ENCODE measurements at regions of chr5 and their contacts with region 1.

Region 1: DNA sequence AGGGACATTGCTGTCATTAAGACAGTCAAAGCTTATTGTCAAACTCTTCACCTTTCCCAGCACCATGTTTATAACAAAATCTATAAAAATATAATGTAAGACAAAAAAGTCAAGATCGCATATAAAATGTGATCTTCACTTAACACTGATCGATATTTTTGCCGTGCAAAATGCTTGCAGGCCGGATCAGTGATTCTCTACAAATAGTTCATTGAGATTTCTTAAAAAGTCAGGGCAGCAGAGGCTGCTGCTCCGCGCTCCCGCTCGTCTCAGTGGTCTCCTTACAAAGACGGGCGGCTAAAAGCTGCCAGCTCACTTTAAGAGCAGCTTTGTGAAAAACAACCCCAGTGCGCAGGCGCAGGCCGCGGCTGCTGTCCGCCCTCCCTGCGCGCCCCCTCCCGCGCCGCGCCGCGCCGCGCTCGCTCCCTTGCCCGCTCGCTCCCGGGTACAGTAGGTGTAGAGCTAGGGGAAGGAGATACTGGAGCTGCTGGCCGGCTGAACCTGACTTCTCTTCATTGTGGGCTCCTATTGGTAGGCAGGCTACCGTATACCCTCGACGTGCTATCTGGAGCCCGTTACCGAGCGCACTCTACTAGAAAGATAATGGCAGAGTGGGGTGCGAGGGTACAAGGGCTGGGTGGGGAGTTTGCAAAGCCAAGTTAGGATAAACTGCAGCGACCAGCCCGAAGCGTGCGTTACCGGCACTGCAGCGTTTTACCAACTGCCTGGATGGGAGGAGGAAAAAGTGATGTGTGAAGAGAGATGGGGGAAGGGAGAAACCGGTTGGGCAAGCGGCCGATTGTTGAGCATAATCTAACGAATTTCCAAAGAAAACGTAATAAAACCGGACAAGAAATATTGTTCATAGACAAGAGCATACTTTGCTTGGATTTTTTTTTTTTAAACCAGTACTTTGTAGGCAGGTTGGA is at the start of gene ARRDC3:
- DNase-seq: peak; percentile 84
- CTCF ChIP-seq: no peak

Region 2: DNA sequence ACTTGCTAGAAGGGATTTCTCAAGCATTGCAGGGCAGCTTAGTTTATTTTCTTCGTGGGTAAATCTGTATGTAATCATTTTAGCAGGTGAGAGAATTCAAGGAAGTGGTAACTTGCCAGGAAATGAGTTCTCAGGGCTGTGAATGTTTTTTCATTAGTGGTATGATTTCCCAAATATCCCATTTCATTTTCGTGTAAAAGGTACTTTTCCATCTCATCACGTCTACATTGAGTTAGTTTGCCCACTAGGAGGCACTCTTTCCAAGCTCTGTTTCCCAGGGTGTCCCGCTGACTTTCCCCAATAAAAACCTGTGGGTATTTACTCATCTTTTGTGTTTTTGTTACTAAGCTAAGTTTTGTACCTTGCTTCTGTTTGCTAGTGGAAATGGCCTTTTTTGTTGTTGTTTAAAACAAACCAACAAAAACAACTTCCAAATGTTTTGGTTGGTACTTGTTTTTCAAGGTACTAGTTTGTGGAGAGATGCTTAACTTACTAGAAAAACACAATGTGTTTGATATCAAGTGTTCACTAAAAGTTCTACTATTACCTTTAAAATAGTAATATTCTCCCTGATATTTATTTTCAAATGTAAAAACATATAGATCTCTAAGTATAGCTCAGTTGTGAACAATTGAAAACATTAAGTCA is 451.1 kb before region 1 on chr5:
- CTCF ChIA-PET with region 1: interaction called, 30 read pairs
- POLR2A ChIA-PET with region 1: no interaction called
- DNase-seq: peak; percentile 56
- CTCF ChIP-seq: peak; percentile 76

Region 3: DNA sequence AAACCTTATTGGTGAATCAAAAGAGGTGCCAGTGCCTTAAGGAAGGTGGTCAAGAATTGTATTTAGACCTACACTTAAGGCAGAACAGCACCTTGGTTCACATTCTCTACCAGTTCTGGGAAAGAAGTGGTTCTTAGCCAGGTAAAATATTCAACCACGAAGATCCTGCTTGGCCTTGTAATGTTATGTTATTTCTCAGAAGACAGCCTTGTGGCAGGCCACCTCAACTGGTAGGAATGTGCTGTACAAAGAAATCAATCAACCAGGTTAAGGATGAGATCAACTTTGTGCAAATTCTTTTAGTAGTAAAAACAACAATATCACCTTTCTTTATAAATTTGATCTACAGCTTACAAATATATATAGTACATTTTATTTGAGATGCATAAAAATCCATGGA is 247.0 kb before region 1 on chr5:
- CTCF ChIA-PET with region 1: no interaction called
- POLR2A ChIA-PET with region 1: no interaction called
- DNase-seq: no peak
- CTCF ChIP-seq: no peak

Region 4: GRCh38 chr5:91183737-91184136 is 199.6 kb before region 1 on chr5:
- CTCF ChIA-PET with region 1: interaction called, 23 read pairs
- POLR2A ChIA-PET with region 1: no interaction called
- DNase-seq: no peak
- CTCF ChIP-seq: no peak

Region 5: GRCh38 chr5:91225848-91226686 is 157.2 kb before region 1 on chr5:
- CTCF ChIA-PET with region 1: interaction called, 92 read pairs
- POLR2A ChIA-PET with region 1: interaction called, 6 read pairs
- DNase-seq: peak; percentile 37
- CTCF ChIP-seq: peak; percentile 61

Region 6: GRCh38 chr5:91280362-91281269 is 102.7 kb before region 1 on chr5:
- CTCF ChIA-PET with region 1: interaction called, 13 read pairs
- POLR2A ChIA-PET with region 1: interaction called, 17 read pairs
- DNase-seq: peak; percentile 89
- CTCF ChIP-seq: no peak

Region 7: DNA sequence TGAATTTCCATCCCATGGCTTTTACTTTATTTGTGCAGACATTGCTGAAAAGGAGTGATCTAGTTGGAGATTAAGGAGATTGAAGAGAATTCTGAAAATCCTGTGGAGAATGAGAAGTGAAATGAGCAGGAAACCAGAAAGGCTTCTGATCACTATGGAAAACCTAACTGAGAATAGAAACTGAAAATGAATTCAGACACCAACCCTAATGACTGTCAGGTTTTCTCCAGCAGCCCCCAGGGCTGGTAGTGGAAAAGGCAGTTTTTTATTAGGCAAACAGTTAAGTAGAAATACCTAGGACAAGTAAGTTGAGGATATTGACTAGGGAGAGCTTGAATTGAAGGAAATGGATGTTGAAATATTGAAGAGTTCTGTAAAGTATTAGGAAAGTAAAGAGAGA is 14.5 kb after region 1 on chr5:
- CTCF ChIA-PET with region 1: interaction called, 49 read pairs
- POLR2A ChIA-PET with region 1: interaction called, 3 read pairs
- DNase-seq: no peak
- CTCF ChIP-seq: no peak

Region 8: GRCh38 chr5:91419571-91420537 is 36.6 kb after region 1 on chr5:
- CTCF ChIA-PET with region 1: interaction called, 59 read pairs
- POLR2A ChIA-PET with region 1: no interaction called
- DNase-seq: peak; percentile 27
- CTCF ChIP-seq: peak; percentile 55

Region 9: DNA sequence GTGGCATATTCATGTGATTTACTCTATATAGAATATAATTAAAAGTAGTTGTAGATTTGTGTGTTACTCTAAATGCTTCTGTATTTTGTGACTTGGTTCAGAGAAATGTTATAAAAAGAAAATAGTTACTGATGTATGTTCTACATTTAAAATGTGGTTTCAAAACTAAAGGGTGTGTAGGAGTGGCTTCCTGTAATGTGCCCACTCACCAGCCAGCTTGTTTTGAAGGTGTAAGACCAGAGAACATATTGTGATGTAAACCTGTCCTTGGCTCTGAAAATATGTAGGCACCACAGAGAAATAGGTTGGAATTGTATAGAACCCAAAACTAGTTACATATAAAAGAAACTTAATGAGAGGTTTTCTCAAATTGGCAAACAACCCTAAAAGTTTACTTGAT is 51.1 kb after region 1 on chr5:
- CTCF ChIA-PET with region 1: no interaction called
- POLR2A ChIA-PET with region 1: no interaction called
- DNase-seq: no peak
- CTCF ChIP-seq: no peak

Region 10: DNA sequence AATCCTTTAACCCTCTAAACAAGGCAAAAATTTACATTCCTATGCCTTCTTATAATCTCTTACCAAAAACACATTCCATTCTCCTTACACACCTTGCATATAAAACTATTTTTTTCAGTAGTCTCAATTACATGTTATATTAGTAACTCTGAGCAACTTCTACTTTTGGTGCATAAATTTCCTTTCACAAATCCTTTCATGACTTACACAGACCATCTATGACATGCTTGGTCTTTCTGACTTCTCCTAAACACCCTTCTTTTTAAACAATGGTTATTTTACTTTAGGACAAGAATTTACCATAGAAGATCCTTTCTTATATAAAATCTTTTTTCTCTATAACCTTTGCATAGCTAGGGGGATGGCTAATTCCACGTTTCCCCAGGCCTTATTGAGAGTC is 207.8 kb after region 1 on chr5:
- CTCF ChIA-PET with region 1: no interaction called
- POLR2A ChIA-PET with region 1: no interaction called
- DNase-seq: no peak
- CTCF ChIP-seq: no peak

Measured in GM10248 (cell line).